MCF 10A (cell line): ENCODE measurements at regions of chr14 and their contacts with region 1.

Region 1: DNA sequence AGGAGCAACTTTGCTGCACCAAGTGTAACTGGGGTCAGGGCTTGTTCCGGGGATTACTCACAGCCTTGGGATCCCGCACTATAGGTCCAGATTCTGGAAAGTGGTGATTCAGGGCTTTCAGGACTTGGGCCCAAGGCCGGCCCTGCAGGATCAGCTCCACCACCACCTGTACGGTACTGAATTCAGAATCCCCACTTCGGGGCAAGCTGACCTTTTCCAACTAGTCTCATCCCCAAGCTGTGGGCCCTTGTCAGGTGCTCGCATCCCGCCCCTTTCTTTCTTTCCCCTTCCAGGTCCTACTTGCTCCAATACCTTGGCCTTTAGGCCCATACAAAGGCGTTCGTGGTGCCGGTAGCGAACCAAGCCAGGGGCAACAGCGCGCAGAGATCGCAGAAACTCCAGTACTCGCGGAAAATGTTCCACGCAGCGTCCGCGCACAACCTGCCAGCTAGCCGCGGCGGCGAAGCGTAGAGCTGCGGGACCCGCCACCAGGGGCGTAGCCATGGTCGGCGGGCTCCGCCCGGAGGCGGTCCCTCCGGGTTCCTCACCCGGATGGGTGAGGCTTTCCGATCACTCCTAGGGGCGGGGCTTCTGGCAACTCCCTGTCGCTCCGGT is 487 bp downstream of the TINF2 start:
- DNase-seq: peak; percentile 94
- H3K4me3 Mint-ChIP-seq: peak overlapping the region; percentile 86
- H3K27ac Mint-ChIP-seq: peak overlapping the region; percentile 100
- H3K4me1 Mint-ChIP-seq: peaks cover 30% of the 10 kb centered on the region
- H3K27me3 Mint-ChIP-seq: no peaks in the 10 kb centered on the region
- CTCF ChIP-seq: peak; percentile 37

Region 2: DNA sequence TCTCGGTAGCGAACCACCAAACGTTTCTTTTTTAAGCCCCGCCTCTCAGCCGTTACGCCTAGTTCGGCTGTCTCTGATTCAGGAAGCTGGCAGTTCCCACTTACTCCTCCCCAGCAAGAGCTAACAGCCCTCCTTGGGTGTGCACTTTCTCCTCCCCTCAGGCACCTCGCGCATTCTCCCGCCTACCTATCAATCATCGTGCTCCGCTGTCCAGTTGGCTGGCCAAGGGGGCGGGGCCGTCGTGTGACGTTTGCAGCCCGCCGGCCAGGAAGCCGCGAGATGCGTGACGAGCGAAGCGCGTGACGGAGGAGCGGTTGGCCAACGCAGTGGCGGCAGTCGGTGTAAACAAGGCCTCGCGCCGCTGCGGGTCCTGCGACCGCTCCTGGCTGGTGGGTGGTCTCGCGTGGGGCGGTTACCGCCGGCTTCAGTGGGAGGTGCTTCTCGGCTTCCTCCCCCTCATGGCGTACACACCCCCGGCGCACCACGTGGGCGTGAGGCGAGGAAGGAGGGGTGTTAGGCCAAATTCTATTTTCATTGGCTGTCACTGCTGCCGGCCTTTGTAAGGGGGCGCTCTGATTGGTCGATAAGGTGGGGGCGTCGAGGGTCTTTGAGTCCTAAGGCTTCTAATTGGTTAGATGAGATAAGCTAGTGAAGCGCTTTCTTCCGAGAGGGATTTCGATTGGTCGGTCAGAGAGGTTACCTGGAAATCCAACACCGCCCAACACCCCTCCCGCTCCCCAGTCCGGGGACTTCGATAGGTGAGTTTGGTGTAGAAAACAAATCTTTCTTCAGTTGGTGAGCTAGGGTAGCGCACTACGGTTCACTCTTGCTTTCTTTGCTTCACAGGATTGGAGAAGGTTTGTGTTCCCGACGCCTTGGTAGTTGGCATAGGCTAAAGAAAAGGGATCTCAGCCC is 127.1 kb before region 1 on chr14 and contains the starts of genes DCAF11 and NRL:
- CTCF ChIA-PET with region 1: no interaction called
- POLR2A ChIA-PET with region 1: interaction called, 19 read pairs
- intact Hi-C with region 1: no loop called
- DNase-seq: peak; percentile 100
- H3K4me3 Mint-ChIP-seq: peak within 1 kb of the TSS; percentile 97
- H3K27ac Mint-ChIP-seq: peak within 1 kb of the TSS; percentile 99
- H3K4me1 Mint-ChIP-seq: peaks cover 9% of the 10 kb centered on the region
- H3K27me3 Mint-ChIP-seq: no peaks in the 10 kb centered on the region
- CTCF ChIP-seq: no peak
- total RNA-seq, gene DCAF11: 38.6 and 48.8 TPM in 2 replicates
- total RNA-seq, gene NRL: 1.3 and 2.1 TPM in 2 replicates

Region 3: DNA sequence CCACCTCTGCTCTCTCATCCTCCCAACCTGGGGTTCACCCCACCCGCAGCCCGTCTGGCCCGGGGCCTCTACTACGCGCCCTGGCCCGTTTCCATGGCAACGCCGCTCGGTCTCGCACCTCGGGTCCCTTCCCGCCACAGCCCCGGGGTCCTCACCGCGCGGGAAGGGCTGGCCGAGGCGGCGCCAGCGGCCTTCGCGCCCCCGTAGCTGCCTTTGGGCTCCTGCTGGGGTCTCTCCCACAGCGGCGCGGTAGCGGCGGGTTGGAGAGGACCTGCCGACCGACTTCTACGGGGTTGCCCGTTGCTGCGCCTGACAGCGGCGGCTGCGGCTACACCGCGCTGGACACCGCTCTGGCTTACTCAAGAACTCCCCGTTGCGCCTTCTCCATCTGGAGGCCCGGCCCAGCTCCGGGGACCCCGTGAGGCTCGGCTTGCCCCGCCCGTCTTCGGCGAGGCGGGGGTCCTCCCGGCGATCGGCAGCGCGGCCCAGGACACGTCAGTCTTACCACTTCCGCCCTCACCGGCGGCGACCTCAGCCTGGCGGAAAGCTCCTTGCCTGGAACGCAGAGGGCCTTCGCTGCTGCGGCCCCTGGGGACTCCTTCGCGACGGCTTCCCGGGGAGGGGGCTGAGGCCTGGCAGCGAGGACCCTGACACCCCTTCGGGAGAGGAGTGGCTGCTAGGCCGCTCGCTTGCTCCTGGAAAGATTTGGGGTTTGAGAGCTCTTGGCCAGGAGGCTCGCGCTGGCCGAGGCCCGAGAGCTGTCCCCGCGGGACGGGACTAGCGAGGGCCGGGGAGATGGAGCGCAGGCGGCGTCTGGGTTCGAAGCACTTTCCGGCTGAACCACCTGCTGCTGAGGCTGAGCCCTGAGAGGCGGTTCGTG is 46.5 kb before region 1 on chr14 and contains the start of gene TM9SF1:
- CTCF ChIA-PET with region 1: interaction called, 3 read pairs
- POLR2A ChIA-PET with region 1: interaction called, 29 read pairs
- intact Hi-C with region 1: loop called (anchors 5 kb)
- DNase-seq: peak; percentile 84
- H3K4me3 Mint-ChIP-seq: peak within 1 kb of the TSS; percentile 81
- H3K27ac Mint-ChIP-seq: peak within 1 kb of the TSS; percentile 96
- H3K4me1 Mint-ChIP-seq: peaks cover 18% of the 10 kb centered on the region
- H3K27me3 Mint-ChIP-seq: no peaks in the 10 kb centered on the region
- CTCF ChIP-seq: no peak
- total RNA-seq, gene TM9SF1: 67.8 and 103 TPM in 2 replicates

Region 4: GRCh38 chr14:24259252-24259995 is 17.5 kb after region 1 on chr14:
- CTCF ChIA-PET with region 1: interaction called, 457 read pairs
- POLR2A ChIA-PET with region 1: interaction called, 27 read pairs
- intact Hi-C with region 1: no loop called
- DNase-seq: peak; percentile 66
- H3K4me3 Mint-ChIP-seq: peak overlapping the region; percentile 57
- H3K27ac Mint-ChIP-seq: peak overlapping the region; percentile 97
- H3K4me1 Mint-ChIP-seq: peaks cover 47% of the 10 kb centered on the region
- H3K27me3 Mint-ChIP-seq: no peaks in the 10 kb centered on the region
- CTCF ChIP-seq: no peak

Region 5: GRCh38 chr14:24279301-24280186 is 37.6 kb after region 1 on chr14:
- CTCF ChIA-PET with region 1: interaction called, 457 read pairs
- POLR2A ChIA-PET with region 1: interaction called, 146 read pairs
- intact Hi-C with region 1: no loop called
- DNase-seq: peak; percentile 57
- H3K4me3 Mint-ChIP-seq: no peak overlapping the region
- H3K27ac Mint-ChIP-seq: peak overlapping the region; percentile 47
- H3K4me1 Mint-ChIP-seq: peaks cover 29% of the 10 kb centered on the region
- H3K27me3 Mint-ChIP-seq: no peaks in the 10 kb centered on the region
- CTCF ChIP-seq: no peak

Region 6: DNA sequence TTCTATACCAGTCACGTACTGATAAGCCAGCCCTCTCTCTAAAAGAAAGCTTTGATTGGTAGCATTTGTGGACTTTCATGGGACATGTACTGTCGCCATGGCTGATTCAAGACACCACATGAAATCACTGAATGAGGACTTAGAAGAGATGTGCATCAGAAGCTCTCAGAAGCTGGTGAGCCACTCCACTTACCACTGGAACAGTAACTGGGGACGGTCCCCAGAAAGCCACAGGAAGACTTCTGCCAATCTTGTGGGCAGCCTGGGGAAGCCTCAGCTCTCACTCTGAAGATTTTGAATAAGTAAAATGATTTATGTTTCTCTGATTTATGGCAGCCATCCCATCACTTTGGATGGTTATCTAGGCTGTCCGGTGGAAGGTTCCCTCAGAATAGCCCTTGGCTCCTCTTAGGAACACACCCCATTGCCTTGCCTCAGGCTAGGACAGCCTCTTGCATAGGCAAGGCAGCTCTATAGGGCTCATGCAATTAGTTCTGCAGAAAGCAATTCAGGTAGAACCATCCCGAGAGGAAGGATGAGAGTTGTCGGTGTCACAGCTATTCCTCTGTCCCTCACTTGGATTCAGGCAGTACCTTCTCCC is 47.8 kb after region 1 on chr14:
- CTCF ChIA-PET with region 1: interaction called, 414 read pairs
- POLR2A ChIA-PET with region 1: interaction called, 19 read pairs
- intact Hi-C with region 1: no loop called
- DNase-seq: no peak
- H3K4me3 Mint-ChIP-seq: no peak overlapping the region
- H3K27ac Mint-ChIP-seq: peak overlapping the region; percentile 73
- H3K4me1 Mint-ChIP-seq: peaks cover 13% of the 10 kb centered on the region
- H3K27me3 Mint-ChIP-seq: no peaks in the 10 kb centered on the region
- CTCF ChIP-seq: no peak

Region 7: DNA sequence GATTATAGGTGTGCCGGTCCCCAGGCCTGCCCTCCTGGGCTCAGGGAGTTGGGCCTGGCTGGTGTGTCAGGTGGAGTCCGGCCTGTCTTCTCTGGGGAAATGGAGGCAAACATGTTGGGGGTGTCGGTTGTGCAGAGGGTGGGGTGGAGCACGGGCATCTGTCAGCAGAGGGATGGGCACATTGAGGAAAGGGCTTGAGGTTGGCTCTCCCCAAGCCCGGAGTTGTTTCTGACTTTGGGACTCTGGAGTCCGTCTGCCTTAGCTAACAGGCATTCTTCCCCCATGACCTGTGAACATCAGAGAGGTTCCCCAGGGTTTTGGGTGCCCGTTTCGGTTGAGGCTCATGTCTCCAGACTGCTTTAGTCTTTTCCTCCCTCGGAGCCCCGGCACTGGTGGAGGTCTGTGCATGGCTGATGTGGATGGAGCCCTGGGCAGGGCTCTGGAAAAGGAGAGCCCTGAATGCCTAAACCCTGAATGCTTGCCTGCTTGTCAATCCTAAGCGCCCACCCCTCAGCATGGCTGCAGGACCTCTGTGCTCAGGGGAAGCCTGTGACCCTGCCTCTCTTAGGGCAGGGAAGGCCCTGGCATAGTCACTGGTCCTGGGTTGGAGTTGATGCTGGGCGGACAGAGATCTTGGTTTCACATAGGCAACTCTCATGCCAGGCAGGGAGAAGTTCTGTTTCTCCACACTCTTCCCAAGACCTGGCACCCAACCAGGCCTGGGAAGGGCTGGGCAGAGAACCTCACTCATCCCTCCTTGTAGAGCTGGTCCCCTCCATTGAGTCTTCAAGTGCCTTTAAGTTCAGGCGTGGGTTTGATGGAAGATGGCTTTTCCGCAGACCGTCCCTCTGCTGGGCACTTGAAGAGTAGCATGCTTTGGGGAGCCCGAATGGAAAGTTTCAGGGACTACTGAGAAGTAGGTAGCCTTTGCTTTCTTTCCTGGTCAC is 169.8 kb after region 1 on chr14:
- CTCF ChIA-PET with region 1: no interaction called
- POLR2A ChIA-PET with region 1: no interaction called
- intact Hi-C with region 1: no loop called
- DNase-seq: peak; percentile 61
- H3K4me3 Mint-ChIP-seq: no peak overlapping the region
- H3K27ac Mint-ChIP-seq: no peak overlapping the region
- H3K4me1 Mint-ChIP-seq: no peaks in the 10 kb centered on the region
- H3K27me3 Mint-ChIP-seq: no peaks in the 10 kb centered on the region
- CTCF ChIP-seq: peak; percentile 58